Activated CD4-positive, alpha-beta T cell treated with anti-CD3 and anti-CD28 coated beads for 36 hours (primary cell): ENCODE measurements at regions of chr19 and their contacts with region 1.

Region 1: GRCh38 chr19:17511724-17512573 is 500 bp downstream of the PGLS start:
- DNase-seq: peak; percentile 92
- ATAC-seq: peak; percentile 52
- H3K4me3 Mint-ChIP-seq: peak overlapping the region; percentile 95
- H3K27ac Mint-ChIP-seq: peak overlapping the region; percentile 88
- H3K4me1 Mint-ChIP-seq: peaks cover 39% of the 10 kb centered on the region
- H3K27me3 Mint-ChIP-seq: no peaks in the 10 kb centered on the region

Region 2: DNA sequence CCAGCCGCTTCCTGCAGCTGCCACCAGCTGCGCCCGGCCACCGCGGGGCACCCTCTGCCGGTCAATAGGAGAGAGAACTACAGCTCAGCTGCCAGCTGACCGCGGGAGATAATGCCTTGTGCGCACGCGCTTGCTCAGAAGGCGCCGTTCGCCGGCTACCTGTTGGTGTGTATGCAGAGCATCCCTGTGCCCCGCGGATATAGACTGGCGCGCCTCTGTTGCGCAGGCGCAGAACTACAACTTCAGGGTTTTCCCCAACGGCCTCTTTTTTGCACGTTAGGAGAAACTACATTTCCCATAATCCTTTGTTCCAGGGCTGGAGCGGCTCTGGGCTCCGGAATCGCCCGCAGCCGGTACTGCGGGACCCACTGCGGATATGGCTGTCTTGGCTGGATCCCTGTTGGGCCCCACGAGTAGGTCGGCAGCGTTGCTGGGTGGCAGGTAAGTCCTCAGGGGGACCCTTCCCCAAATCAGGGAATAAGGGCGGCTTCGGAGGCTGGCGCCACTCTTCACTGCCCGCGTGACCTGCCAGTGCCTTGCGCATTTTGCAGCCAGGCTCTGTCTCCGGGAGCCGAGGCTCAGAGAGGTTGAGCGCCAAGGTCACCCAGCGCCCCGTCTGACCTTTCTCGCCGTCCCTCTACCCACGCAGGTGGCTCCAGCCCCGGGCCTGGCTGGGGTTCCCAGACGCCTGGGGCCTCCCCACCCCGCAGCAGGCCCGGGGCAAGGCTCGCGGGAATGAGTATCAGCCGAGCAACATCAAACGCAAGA is 206.2 kb before region 1 on chr19 and contains the start of gene MRPL34:
- CTCF ChIA-PET with region 1: no interaction called
- POLR2A ChIA-PET with region 1: no interaction called
- intact Hi-C with region 1: loop called in 1 of 2 experiments (anchors 1 kb)
- DNase-seq: peak; percentile 97
- ATAC-seq: peak; percentile 70
- H3K4me3 Mint-ChIP-seq: peak within 1 kb of the TSS; percentile 86
- H3K27ac Mint-ChIP-seq: peak within 1 kb of the TSS; percentile 92
- H3K4me1 Mint-ChIP-seq: peaks cover 46% of the 10 kb centered on the region
- H3K27me3 Mint-ChIP-seq: no peaks in the 10 kb centered on the region
- total RNA-seq, gene MRPL34: 72.0 to 88.6 TPM

Region 3: DNA sequence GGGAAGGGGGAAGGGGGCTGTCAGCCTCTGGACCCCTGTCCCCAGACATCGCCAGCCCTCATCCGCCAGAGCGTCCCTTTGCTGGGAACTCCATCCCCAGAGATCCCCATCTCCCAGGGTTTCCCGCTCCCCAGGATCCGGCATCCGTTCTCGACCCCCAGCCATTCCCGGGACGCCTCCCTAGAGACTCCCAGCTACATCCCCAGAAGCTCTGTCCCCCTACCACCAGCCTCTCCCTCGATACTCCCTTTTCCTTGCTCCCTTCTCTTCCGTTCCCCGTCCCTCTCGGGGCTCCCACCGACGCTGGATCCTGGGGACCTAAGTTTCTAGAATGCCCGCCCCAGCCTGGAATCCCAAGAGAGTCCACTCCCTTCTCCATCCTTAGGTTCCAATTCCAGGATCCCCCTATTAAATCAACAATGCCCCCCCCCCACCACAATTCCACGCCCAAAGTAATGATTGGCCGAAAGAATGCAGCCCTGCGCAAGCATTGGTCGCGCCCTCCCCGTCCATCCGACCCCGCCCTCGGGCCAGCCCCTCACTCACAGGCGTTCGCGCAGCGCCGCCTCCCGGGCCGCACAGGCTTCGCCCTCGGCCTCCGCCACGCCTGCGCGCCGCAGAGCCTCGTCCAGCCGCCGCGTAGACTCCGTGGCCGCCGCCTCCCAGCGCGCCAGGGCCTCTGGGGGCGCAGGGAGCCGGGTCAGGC is 121.1 kb before region 1 on chr19:
- CTCF ChIA-PET with region 1: no interaction called
- POLR2A ChIA-PET with region 1: no interaction called
- intact Hi-C with region 1: loop called in 1 of 2 experiments (anchors 1 kb)
- DNase-seq: peak; percentile 97
- ATAC-seq: peak; percentile 98
- H3K4me3 Mint-ChIP-seq: peak overlapping the region; percentile 83
- H3K27ac Mint-ChIP-seq: peak overlapping the region; percentile 33
- H3K4me1 Mint-ChIP-seq: peaks cover 24% of the 10 kb centered on the region
- H3K27me3 Mint-ChIP-seq: peaks cover 4% of the 10 kb centered on the region

Region 4: GRCh38 chr19:17496337-17496997 is 15.5 kb before region 1 on chr19:
- CTCF ChIA-PET with region 1: interaction called, 13 read pairs
- POLR2A ChIA-PET with region 1: no interaction called
- intact Hi-C with region 1: loop called in 1 of 2 experiments (anchors 1 kb)
- DNase-seq: peak; percentile 93
- ATAC-seq: peak; percentile 99
- H3K4me3 Mint-ChIP-seq: no peak overlapping the region
- H3K27ac Mint-ChIP-seq: no peak overlapping the region
- H3K4me1 Mint-ChIP-seq: peaks cover 14% of the 10 kb centered on the region
- H3K27me3 Mint-ChIP-seq: no peaks in the 10 kb centered on the region

Region 5: GRCh38 chr19:17579661-17580244 is 67.8 kb after region 1 on chr19:
- CTCF ChIA-PET with region 1: no interaction called
- POLR2A ChIA-PET with region 1: no interaction called
- intact Hi-C with region 1: loop called in 1 of 2 experiments (anchors 1 kb)
- DNase-seq: peak; percentile 52
- ATAC-seq: peak; percentile 56
- H3K4me3 Mint-ChIP-seq: no peak overlapping the region
- H3K27ac Mint-ChIP-seq: no peak overlapping the region
- H3K4me1 Mint-ChIP-seq: no peaks in the 10 kb centered on the region
- H3K27me3 Mint-ChIP-seq: no peaks in the 10 kb centered on the region

Region 6: GRCh38 chr19:17658666-17659065 is 146.7 kb after region 1 on chr19:
- CTCF ChIA-PET with region 1: no interaction called
- POLR2A ChIA-PET with region 1: no interaction called
- intact Hi-C with region 1: no loop called
- DNase-seq: no peak
- ATAC-seq: no peak
- H3K4me3 Mint-ChIP-seq: no peak overlapping the region
- H3K27ac Mint-ChIP-seq: no peak overlapping the region
- H3K4me1 Mint-ChIP-seq: no peaks in the 10 kb centered on the region
- H3K27me3 Mint-ChIP-seq: peaks cover 3% of the 10 kb centered on the region

Region 7: GRCh38 chr19:17847538-17848366 is 335.8 kb after region 1 on chr19 and contains the start of gene JAK3:
- CTCF ChIA-PET with region 1: no interaction called
- POLR2A ChIA-PET with region 1: no interaction called
- intact Hi-C with region 1: loop called in 1 of 2 experiments (anchors 5 kb)
- DNase-seq: peak; percentile 96
- ATAC-seq: peak; percentile 82
- H3K4me3 Mint-ChIP-seq: peak within 1 kb of the TSS; percentile 92
- H3K27ac Mint-ChIP-seq: peak within 1 kb of the TSS; percentile 98
- H3K4me1 Mint-ChIP-seq: peaks cover 69% of the 10 kb centered on the region
- H3K27me3 Mint-ChIP-seq: no peaks in the 10 kb centered on the region
- total RNA-seq, gene JAK3: 174 to 180 TPM